ENCODE measurements at regions of chr9 and their contacts with region 1.

Region 1: GRCh38 chr9:71704796-71705195 is 63.5 kb downstream of the CEMIP2 start:
- DNase-seq: no peak
- ATAC-seq: no peak
- H3K4me3 Mint-ChIP-seq: no peak overlapping the region
- H3K27ac Mint-ChIP-seq: peak overlapping the region; percentile 72
- H3K4me1 Mint-ChIP-seq: peaks cover 16% of the 10 kb centered on the region
- H3K27me3 Mint-ChIP-seq: no peaks in the 10 kb centered on the region
- CTCF ChIP-seq: no peak

Region 2: DNA sequence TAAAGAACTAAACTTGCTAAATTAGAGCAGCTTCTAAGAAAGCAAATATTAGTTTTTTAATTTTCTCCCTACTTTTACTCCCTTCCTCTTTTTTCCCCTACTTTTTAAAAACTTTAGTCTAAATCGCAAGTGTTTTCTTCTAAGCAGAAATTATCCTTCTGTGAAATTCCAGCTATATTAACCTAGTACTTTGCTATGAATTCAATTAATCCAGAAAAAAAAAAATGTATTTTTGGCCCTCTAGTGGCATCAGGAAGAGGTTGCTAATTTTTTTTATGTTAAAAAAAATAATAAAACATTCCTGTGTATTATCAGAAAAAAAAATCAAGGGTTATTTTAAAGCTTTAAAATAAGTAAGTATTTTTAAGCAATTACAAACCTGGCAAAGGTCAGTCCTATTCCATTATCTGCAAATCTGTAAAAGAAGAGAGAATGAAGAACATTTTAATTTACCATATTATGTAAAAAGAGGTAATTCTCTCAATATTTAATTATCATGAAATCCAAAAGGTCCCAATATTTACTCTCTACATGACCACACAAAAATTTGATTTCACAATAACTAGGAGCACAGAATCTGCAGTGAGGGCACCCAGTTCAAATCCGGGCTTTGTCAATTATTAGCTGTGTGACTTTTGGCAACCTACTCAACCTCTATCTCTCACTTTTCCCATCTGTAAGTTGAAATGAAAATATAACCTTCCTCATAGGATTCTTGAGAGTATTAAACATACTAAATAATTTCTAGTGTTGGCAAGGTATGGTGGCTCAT is 11.5 kb after region 1 on chr9:
- CTCF ChIA-PET with region 1: interaction called, 12 read pairs
- POLR2A ChIA-PET with region 1: no interaction called
- intact Hi-C with region 1: no loop called
- DNase-seq: no peak
- ATAC-seq: no peak
- H3K4me3 Mint-ChIP-seq: no peak overlapping the region
- H3K27ac Mint-ChIP-seq: no peak overlapping the region
- H3K4me1 Mint-ChIP-seq: peaks cover 4% of the 10 kb centered on the region
- H3K27me3 Mint-ChIP-seq: no peaks in the 10 kb centered on the region
- CTCF ChIP-seq: peak; percentile 63